ENCODE measurements at regions of chr7 and their contacts with region 1.

Region 1: GRCh38 chr7:100418930-100419659 is 9.4 kb downstream of the ZCWPW1 start:
- DNase-seq: no peak
- ATAC-seq: no peak
- H3K4me3 ChIP-seq: no peak overlapping the region
- H3K4me3 Mint-ChIP-seq: no peak overlapping the region
- H3K27ac ChIP-seq: no peak overlapping the region
- H3K27ac Mint-ChIP-seq: no peak overlapping the region
- H3K4me1 ChIP-seq: no peaks in the 10 kb centered on the region
- H3K4me1 Mint-ChIP-seq: no peaks in the 10 kb centered on the region
- H3K27me3 ChIP-seq: no peaks in the 10 kb centered on the region
- H3K27me3 Mint-ChIP-seq: no peaks in the 10 kb centered on the region
- CTCF ChIP-seq: no peak

Region 2: GRCh38 chr7:100369105-100369504 is 50.0 kb before region 1 on chr7:
- CTCF ChIA-PET with region 1: no interaction called
- POLR2A ChIA-PET with region 1: no interaction called
- intact Hi-C with region 1: loop called in 1 of 2 experiments (anchors 10 kb)
- DNase-seq: peak in 4 of 9 experiments; percentile 21 to 73 (median 46)
- ATAC-seq: peak; percentile 27
- H3K4me3 ChIP-seq: no peak overlapping the region
- H3K4me3 Mint-ChIP-seq: no peak overlapping the region
- H3K27ac ChIP-seq: peak overlapping the region in 1 of 2 experiments; percentile 57
- H3K27ac Mint-ChIP-seq: peak overlapping the region; percentile 69
- H3K4me1 ChIP-seq: peaks cover 29% of the 10 kb centered on the region
- H3K4me1 Mint-ChIP-seq: peaks cover 47% of the 10 kb centered on the region
- H3K27me3 ChIP-seq: no peaks in the 10 kb centered on the region
- H3K27me3 Mint-ChIP-seq: no peaks in the 10 kb centered on the region
- CTCF ChIP-seq: no peak

Region 3: GRCh38 chr7:100456558-100456957 is 37.5 kb after region 1 on chr7:
- CTCF ChIA-PET with region 1: no interaction called
- POLR2A ChIA-PET with region 1: no interaction called
- intact Hi-C with region 1: no loop called
- DNase-seq: no peak
- ATAC-seq: no peak
- H3K4me3 ChIP-seq: no peak overlapping the region
- H3K4me3 Mint-ChIP-seq: no peak overlapping the region
- H3K27ac ChIP-seq: no peak overlapping the region
- H3K27ac Mint-ChIP-seq: no peak overlapping the region
- H3K4me1 ChIP-seq: peaks cover 8% of the 10 kb centered on the region
- H3K4me1 Mint-ChIP-seq: peaks cover 9% of the 10 kb centered on the region
- H3K27me3 ChIP-seq: no peaks in the 10 kb centered on the region
- H3K27me3 Mint-ChIP-seq: no peaks in the 10 kb centered on the region
- CTCF ChIP-seq: no peak

Region 4: DNA sequence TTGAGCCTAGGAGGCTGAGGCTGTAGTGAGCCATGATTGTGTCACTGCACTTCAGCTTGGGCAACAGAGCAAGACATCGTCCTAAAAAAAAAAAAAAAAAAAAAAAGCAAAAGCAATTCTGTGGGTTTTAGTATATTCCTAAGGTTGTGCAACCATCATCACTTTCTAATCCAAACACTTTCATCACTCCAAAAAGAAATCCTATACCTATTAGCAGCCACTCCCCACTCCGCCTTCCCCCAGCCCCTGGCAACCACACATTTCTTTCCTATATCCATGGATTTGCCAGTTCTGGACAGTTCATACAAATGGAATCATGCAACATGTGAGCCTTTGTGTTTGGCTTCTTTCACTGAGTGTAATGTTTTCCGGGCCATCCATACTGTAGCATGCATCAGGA is 334.7 kb after region 1 on chr7:
- CTCF ChIA-PET with region 1: no interaction called
- POLR2A ChIA-PET with region 1: no interaction called
- intact Hi-C with region 1: no loop called
- DNase-seq: no peak
- ATAC-seq: no peak
- H3K4me3 ChIP-seq: no peak overlapping the region
- H3K4me3 Mint-ChIP-seq: no peak overlapping the region
- H3K27ac ChIP-seq: no peak overlapping the region
- H3K27ac Mint-ChIP-seq: no peak overlapping the region
- H3K4me1 ChIP-seq: no peaks in the 10 kb centered on the region
- H3K4me1 Mint-ChIP-seq: no peaks in the 10 kb centered on the region
- H3K27me3 ChIP-seq: peaks cover 0 to 3% of the 10 kb centered on the region in 2 experiments
- H3K27me3 Mint-ChIP-seq: peaks cover 21% of the 10 kb centered on the region
- CTCF ChIP-seq: no peak